Stomach (tissue), 19 donors: ENCODE measurements at regions of chr2 and their contacts with region 1.

Region 1: DNA sequence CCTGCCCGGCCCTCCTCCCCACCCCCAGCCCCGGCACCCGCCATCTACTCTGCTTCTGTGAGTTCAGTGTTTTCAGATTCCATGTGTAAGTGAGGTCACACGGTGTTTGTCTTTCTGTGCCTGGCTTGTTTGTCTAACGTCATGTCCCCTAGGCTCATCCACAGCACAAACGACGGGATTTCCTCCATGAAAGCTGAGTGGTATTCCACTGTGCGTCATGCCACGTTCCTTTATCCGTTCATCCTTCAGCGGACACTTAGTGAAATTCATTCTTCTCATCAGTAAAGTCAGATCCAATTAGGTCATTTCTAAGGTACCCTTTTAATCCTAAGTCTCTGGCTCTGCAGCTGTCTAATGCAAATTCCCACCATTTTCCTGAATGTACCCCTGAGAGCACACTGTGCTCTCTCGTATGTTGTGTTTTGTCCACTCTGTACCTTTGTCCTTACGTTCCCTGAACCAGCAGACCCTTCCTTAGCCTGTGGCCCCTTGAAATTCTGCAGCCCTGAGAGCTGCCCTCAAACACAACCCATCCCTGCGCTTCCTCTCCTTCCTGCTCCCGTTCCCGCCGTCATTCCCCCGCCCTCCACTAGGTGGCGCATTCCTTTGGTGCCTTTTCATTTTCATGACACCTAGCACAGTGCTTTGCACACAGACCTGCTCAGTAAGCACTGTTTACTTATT is 44.1 kb downstream of the TRAPPC12 start:
- DNase-seq: peak; percentile 72 to 80
- H3K4me3 ChIP-seq: no peak overlapping the region
- H3K27ac ChIP-seq: no peak overlapping the region
- H3K4me1 ChIP-seq: peaks cover 0 to 5% (median 2%) of the 10 kb centered on the region in 4 donors
- H3K27me3 ChIP-seq: no peaks in the 10 kb centered on the region
- CTCF ChIP-seq: peak in 5 of 7 experiments; percentile 96 to 99 (median 98)
- EP300 ChIP-seq: no peak
- POLR2A ChIP-seq: no peak

Region 2: GRCh38 chr2:3651691-3652648 is 228.3 kb after region 1 on chr2:
- intact Hi-C with region 1: loop called (anchors 5 kb)
- DNase-seq: peak; percentile 62 to 94
- H3K4me3 ChIP-seq: peak overlapping the region; percentile 19 to 39 (median 34)
- H3K27ac ChIP-seq: peak overlapping the region; percentile 33 to 73 (median 63)
- H3K4me1 ChIP-seq: peaks cover 8 to 16% (median 12%) of the 10 kb centered on the region in 4 donors
- H3K27me3 ChIP-seq: peaks cover 0 to 27% (median 0%) of the 10 kb centered on the region in 3 donors
- CTCF ChIP-seq: no peak
- EP300 ChIP-seq: no peak
- POLR2A ChIP-seq: no peak